Activated CD8-positive, alpha-beta T cell treated with anti-CD3 and anti-CD28 coated beads for 36 hours (primary cell): ENCODE measurements at regions of chr11 and their contacts with region 1.

Region 1: DNA sequence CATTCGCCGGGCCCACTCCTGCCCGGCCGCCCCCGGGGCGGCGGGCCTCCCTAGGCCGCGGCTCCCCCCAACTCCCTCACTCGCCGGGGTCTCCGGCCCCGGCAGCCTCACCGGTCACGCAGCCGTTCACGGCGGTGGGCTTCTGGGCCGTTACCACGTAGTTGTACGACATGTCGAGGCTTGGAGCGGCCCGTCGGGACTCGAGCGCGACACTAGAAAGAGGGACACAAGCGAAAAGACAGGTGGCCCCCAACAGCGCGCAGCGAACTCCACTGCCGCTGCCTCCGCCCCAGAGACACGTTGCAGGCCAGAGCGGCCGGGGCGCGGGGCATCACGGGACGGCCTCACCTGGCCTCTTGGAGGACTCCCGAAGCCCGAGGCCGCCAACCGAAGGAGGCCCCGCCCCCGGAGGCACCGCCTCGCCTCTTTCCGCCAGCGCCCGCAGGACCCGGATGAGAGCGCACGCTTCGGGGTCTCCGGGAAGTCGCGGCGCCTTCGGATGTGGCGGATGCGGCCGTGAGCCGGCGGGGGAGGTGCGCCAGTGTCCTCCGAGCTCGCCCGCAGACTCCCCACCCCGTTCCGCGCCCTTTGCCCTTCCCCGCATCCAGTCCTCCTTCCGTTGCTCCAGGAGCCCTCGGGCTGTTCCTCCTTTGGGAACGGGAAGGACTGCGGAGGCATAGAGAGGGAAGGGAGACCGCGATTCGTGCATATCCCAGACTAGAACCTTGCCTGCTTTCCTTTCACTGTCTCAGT is at the starts of genes DDB1 and TKFC:
- DNase-seq: peak; percentile 98
- ATAC-seq: peak; percentile 94
- H3K4me3 Mint-ChIP-seq: peak within 1 kb of the TSS; percentile 86
- H3K27ac Mint-ChIP-seq: peak within 1 kb of the TSS; percentile 96
- H3K4me1 Mint-ChIP-seq: peaks cover 66% of the 10 kb centered on the region
- H3K27me3 Mint-ChIP-seq: no peaks in the 10 kb centered on the region
- CTCF ChIP-seq: no peak
- total RNA-seq, gene DDB1: 269 to 270 TPM
- total RNA-seq, gene TKFC: 79.1 to 86.3 TPM

Region 2: DNA sequence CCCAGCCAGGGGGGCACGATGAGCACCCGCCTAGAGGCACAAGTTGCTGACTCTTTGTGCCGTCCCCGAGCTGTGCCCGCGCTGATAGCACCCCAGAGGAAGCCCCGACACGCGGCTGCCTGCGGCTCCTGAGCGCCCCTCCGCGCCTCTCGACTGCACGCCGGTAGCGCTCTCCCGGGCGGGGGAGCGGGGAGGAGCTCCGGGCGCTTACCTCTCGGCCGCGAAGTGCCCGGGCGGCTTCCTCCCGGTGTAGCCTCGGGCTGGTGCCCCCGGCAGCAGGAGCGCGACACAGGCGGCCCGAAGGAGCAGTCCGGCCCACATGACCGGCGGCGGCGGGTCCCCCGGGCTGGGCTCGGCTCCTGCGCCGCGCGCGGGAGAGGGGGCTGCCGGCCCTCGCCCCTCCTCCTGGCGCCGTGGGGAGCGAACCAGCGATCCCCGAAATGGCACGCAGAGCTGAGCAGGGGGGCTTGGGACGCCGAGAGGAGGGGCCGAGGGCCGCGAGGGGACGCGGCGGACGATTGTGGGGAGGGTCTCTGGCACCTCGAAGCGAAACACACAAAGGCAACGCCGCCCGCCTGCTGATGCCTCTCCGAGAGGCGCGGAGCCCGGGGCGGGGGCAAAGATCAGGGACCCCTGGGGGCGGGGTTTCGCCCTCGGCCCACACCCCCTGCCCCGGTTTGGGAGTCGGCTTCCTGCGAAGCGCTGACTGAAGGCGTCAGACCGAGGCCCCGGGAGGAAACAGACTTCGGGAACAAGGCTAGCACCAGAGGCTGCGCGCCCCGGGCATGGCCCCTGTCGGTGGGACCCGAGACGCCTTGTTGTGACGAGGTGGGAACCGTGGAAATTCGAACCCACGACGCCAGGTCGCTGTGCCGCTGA is 38.0 kb before region 1 on chr11 and contains the start of gene VWCE:
- CTCF ChIA-PET with region 1: interaction called, 23 read pairs
- POLR2A ChIA-PET with region 1: interaction called, 26 read pairs
- intact Hi-C with region 1: no loop called
- DNase-seq: peak; percentile 88
- ATAC-seq: peak; percentile 83
- H3K4me3 Mint-ChIP-seq: peak within 1 kb of the TSS; percentile 92
- H3K27ac Mint-ChIP-seq: peak within 1 kb of the TSS; percentile 92
- H3K4me1 Mint-ChIP-seq: peaks cover 42% of the 10 kb centered on the region
- H3K27me3 Mint-ChIP-seq: peaks cover 5% of the 10 kb centered on the region
- CTCF ChIP-seq: peak; percentile 23
- total RNA-seq, gene VWCE: 23.3 to 25.8 TPM

Region 3: DNA sequence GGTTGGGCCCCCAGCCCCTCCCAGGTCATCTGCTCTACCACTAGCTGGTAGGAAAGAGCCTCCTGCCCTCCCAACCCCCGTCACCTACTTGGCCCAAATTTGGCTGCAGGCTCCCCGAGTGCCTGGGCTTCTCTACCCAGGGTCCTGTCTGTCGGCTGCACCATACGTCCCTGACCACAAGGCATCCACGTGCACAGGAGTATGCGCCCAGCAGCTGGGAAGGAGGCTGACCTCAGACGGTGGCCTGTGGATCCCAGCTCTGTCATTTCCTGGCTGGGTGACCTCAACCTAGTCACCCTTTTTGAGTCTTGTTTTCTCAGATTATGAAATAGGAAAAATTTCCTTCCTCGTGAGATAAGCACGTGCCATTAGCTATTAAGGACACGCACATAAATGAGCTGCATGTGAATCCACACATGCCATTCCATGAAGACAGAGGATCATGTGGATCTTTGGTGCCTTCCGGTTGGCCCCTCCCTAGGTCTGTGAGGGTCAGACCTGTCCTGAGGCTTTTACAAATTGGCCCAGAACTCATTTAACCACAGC is 15.0 kb after region 1 on chr11:
- CTCF ChIA-PET with region 1: interaction called, 181 read pairs
- POLR2A ChIA-PET with region 1: interaction called, 8 read pairs
- intact Hi-C with region 1: no loop called
- DNase-seq: no peak
- ATAC-seq: no peak
- H3K4me3 Mint-ChIP-seq: no peak overlapping the region
- H3K27ac Mint-ChIP-seq: no peak overlapping the region
- H3K4me1 Mint-ChIP-seq: no peaks in the 10 kb centered on the region
- H3K27me3 Mint-ChIP-seq: no peaks in the 10 kb centered on the region
- CTCF ChIP-seq: no peak

Region 4: GRCh38 chr11:61369372-61370219 is 36.6 kb after region 1 on chr11:
- CTCF ChIA-PET with region 1: interaction called, 181 read pairs
- POLR2A ChIA-PET with region 1: interaction called, 20 read pairs
- intact Hi-C with region 1: no loop called
- DNase-seq: no peak
- ATAC-seq: peak; percentile 13
- H3K4me3 Mint-ChIP-seq: no peak overlapping the region
- H3K27ac Mint-ChIP-seq: peak overlapping the region; percentile 63
- H3K4me1 Mint-ChIP-seq: peaks cover 15% of the 10 kb centered on the region
- H3K27me3 Mint-ChIP-seq: no peaks in the 10 kb centered on the region
- CTCF ChIP-seq: no peak

Region 5: DNA sequence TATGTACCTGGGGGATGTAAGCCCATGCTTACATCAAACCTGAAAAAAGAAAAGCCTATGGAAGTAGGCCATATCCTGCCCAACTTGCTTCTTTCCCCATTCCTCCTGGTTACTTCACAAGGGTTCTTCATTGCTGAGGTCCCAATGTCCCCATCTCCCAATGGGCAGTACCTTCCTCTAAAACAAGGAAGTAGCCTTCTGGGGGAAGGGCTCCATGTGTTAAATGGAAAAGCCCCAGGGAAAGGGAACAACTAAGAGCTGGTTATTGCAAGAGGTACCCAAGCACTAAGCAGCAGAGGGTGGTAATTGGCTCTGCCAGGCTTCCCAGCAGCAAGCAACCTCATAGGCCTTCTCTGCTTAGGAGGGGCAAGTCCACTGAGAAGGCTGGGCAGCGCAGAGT is 70.7 kb after region 1 on chr11:
- CTCF ChIA-PET with region 1: interaction called, 28 read pairs
- POLR2A ChIA-PET with region 1: no interaction called
- intact Hi-C with region 1: no loop called
- DNase-seq: no peak
- ATAC-seq: no peak
- H3K4me3 Mint-ChIP-seq: no peak overlapping the region
- H3K27ac Mint-ChIP-seq: no peak overlapping the region
- H3K4me1 Mint-ChIP-seq: peaks cover 1% of the 10 kb centered on the region
- H3K27me3 Mint-ChIP-seq: no peaks in the 10 kb centered on the region
- CTCF ChIP-seq: no peak

Region 6: DNA sequence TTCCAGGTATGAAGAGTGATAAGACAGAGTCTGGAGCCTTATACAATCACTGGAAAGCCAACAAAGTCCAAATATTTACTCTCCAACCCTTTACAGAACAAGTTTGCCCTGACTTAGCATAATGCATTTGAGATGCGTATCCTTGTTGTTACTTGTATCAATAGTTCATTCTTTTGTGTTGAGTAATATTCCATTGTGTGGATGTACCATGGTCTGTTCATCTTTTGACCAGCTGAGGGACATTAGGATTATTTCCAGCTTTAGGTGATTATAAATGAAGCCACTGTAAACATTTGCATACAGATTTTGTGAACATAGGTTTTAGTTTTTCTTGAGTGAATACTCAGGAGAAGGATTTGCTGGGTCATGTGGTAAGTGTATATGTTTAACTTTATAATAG is 106.6 kb after region 1 on chr11:
- CTCF ChIA-PET with region 1: interaction called, 54 read pairs
- POLR2A ChIA-PET with region 1: interaction called, 3 read pairs
- intact Hi-C with region 1: no loop called
- DNase-seq: no peak
- ATAC-seq: no peak
- H3K4me3 Mint-ChIP-seq: no peak overlapping the region
- H3K27ac Mint-ChIP-seq: no peak overlapping the region
- H3K4me1 Mint-ChIP-seq: peaks cover 23% of the 10 kb centered on the region
- H3K27me3 Mint-ChIP-seq: no peaks in the 10 kb centered on the region
- CTCF ChIP-seq: no peak

Region 7: DNA sequence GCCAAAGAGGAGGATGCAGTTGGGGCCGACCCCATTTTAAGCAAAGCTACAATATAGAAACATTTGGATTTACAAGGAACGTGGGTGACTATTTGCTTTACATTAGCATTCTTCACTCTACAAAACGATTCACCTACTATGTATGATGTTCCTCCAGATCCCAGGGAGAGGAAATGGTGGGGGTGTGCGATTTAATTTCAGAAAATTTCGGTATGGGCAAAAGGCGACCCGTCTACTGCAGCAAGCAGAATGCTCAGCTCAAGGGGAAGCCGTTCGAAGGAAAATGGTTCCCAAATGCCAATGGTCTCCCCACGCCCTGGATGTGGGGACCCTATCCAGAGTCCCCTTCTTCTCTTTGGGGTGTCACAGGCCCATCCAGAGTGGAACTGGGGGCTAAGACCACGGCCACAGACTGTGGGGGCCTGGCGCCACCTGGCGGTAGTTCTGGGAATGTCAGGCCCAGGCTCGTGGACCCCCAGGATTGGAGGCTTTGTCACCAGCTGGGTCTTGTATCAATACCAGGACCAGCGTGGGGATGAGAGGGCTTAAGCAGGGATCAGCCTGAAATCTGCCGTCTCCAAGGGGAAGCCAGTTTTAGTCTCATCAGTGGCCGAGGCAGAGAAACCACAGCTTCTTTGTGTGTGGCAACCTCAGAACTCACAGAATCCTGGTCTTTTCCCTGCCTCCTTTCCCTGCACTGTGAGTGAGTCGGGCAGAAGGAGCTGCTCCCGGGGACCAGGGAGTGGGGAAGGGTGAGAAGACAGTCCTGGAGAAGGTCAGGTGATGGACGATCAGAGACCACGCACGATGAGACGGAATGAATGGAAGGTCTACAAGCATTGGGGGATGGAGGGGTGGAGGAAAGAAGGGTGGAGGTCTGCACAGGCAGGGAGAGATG is 184.0 kb after region 1 on chr11:
- CTCF ChIA-PET with region 1: interaction called, 11 read pairs
- POLR2A ChIA-PET with region 1: no interaction called
- intact Hi-C with region 1: no loop called
- DNase-seq: peak; percentile 74
- ATAC-seq: peak; percentile 88
- H3K4me3 Mint-ChIP-seq: peak overlapping the region; percentile 1
- H3K27ac Mint-ChIP-seq: no peak overlapping the region
- H3K4me1 Mint-ChIP-seq: peaks cover 6% of the 10 kb centered on the region
- H3K27me3 Mint-ChIP-seq: peaks cover 8% of the 10 kb centered on the region
- CTCF ChIP-seq: peak; percentile 99